AG04450 (cell line): ENCODE measurements at regions of chr15 and their contacts with region 1.

Region 1: GRCh38 chr15:48330855-48331795 is at the start of gene DUT:
- DNase-seq: peak; percentile 34
- H3K4me3 ChIP-seq: peak within 1 kb of the TSS; percentile 82
- H3K27ac ChIP-seq: peak within 1 kb of the TSS; percentile 93
- H3K27me3 ChIP-seq: no peaks in the 10 kb centered on the region
- CTCF ChIP-seq: peak; percentile 10; the same call in 1 of the 2 replicates
- polyA plus RNA-seq, gene DUT: 35.9 and 52.8 TPM in 2 replicates

Region 2: DNA sequence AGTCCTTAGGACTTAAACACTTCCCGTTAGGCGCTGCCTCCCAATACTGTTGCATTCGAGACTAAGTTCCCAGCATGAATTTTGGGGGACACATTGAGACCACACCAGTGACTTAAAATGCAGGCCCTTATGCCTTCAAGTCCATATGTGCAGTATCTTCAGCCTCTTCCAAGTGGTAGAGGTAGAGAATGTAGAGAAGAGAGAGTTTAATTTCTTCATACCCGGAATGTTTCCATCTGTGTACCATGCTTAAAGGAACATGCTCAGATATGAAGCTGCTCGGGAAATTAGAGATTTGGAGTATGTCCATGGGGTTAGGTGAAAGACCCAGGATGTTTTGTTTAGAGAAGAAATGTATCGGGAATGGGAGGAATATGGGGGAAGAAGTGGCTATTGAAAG is 12.7 kb after region 1 on chr15:
- CTCF ChIA-PET with region 1: interaction called, 4 read pairs
- POLR2A ChIA-PET with region 1: interaction called, 10 read pairs
- DNase-seq: no peak
- H3K4me3 ChIP-seq: no peak overlapping the region
- H3K27ac ChIP-seq: no peak overlapping the region
- H3K27me3 ChIP-seq: no peaks in the 10 kb centered on the region
- CTCF ChIP-seq: no peak

Region 3: GRCh38 chr15:48682949-48683651 is 352.0 kb after region 1 on chr15:
- CTCF ChIA-PET with region 1: no interaction called
- POLR2A ChIA-PET with region 1: no interaction called
- DNase-seq: no peak
- H3K4me3 ChIP-seq: no peak overlapping the region
- H3K27ac ChIP-seq: no peak overlapping the region
- H3K27me3 ChIP-seq: no peaks in the 10 kb centered on the region
- CTCF ChIP-seq: no peak